ENCODE measurements at regions of chr4 and their contacts with region 1.

Region 1: DNA sequence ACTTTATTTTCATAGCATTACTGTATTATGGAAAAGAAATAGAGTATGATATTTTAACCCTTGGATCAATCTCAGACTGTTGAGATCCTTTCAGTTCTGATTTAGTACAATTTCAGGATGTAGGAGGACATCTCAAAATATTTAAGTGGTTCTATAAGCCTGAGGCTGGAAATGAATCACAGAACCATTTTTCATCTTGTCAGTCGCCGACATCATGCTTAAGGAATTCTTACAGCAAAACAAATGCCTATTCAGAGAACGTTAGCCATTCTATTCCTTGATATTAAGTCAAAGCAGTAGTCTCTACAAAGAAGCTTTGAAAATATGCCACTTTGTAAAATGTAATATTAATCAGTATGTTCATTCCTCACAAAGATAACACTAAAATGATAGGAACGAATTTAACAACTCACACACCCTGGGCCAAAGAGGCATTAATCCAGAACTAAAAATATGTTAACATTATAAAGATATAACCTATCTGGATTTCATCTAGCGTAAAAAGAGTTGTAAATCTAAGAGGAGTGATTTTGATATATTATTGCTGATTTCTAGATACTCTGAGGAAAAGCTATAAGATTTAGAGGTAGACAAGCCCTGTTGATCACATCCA is 152.0 kb downstream of the GASK1B start:
- DNase-seq: no peak

Region 2: GRCh38 chr4:158410272-158410671 is 389.4 kb after region 1 on chr4:
- intact Hi-C with region 1: loop called in 1 of 2 experiments (anchors 2 kb)
- DNase-seq: no peak

Measured in posterior vena cava (tissue), 2 donors.